ENCODE measurements at regions of chr16 and their contacts with region 1.

Region 1: GRCh38 chr16:21263640-21264570 is 14.2 kb downstream of the CRYM start:
- DNase-seq: no peak

Region 2: DNA sequence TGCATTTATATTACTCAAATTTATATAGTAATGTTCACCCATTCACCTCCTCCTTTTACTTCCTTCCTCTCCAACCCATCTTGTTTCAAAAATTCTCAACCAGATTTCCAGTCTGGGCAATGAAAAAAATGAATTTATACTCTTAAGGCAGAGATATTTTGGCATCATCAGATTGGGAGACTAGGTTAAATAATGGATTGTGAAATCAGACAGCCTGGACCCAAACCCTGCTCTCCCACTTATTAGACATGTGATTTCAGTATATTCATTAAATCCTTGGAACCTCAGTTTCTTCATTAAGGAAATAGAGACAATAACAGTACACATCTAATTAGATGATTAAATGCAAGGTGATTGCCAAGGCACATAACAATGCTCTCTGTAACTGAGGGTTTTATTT is 574.2 kb before region 1 on chr16:
- intact Hi-C with region 1: loop called in 1 of 2 experiments (anchors 5 kb)
- DNase-seq: no peak

Region 3: GRCh38 chr16:21244518-21245215 is 19.2 kb before region 1 on chr16:
- intact Hi-C with region 1: no loop called
- DNase-seq: no peak

Region 4: DNA sequence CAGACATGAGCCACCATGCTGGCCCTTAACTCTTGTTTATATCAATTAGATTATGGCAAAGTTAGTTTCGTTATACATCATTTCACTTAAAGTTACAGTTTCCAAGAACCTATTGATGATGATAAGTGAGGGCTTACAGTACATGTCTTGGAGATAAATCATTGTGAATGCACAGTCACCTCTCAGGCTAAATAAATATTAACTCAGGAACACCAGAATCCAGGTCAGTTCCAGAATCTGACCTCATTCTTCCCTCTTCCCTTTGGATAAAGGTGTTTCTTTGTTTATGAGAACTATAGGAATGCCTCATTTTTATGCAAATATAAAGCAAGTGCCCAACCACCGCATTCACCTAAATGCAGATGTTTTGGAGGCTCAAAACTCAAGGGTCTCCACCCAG is 62.6 kb after region 1 on chr16:
- intact Hi-C with region 1: no loop called
- DNase-seq: no peak

Region 5: DNA sequence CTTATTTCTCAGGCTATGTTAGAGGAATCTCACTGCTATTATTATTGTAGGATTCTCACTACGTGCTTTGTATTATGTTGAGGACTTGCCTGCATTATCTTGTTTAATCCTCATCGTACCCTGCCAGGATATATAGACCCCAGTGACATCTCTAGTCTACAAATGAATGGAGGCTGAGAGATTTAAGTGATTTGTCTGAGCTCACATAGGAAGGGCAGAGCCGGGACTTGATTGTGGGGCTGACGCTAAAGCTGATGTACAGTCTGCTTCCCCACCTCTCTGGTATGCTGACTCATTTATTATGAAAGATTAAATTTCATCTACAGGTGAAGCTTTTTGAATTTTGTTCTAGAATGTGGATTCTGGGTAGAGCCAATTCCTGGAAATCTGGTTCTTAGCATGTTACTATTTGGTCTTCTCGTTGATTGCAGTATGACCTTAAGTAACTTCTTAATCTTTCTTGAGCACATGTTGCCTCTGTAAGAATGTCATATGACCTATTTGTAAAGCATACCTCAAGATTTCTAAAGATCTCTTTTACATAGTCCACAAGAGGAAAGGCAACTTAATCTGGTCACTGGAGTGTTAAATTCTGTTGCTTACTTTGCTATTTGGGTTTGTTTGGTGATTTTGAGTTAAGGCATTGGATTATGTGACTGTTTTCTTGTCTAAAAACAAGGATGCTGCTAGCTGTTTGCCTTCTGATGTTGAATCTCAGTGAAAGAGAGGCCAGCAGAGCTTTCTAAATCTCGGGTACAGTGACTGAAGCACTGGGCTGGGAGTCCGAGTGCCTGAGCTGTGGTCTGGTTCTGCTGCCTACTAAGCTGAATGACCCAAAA is 347.9 kb after region 1 on chr16:
- intact Hi-C with region 1: loop called in 1 of 2 experiments (anchors 5 kb)
- DNase-seq: no peak

Measured in posterior vena cava (tissue), 2 donors.